GM10248 (cell line): ENCODE measurements at regions of chr15 and their contacts with region 1.

Region 1: GRCh38 chr15:40893733-40894688 is at the start of gene VPS18:
- DNase-seq: peak; percentile 96
- CTCF ChIP-seq: peak; percentile 95

Region 2: GRCh38 chr15:40593588-40594428 is 300.2 kb before region 1 on chr15 and contains the start of gene KNL1:
- CTCF ChIA-PET with region 1: interaction called, 10 read pairs
- POLR2A ChIA-PET with region 1: interaction called, 5 read pairs
- DNase-seq: peak; percentile 87
- CTCF ChIP-seq: no peak

Region 3: GRCh38 chr15:40722934-40723333 is 171.1 kb before region 1 on chr15:
- CTCF ChIA-PET with region 1: no interaction called
- POLR2A ChIA-PET with region 1: no interaction called
- DNase-seq: no peak
- CTCF ChIP-seq: no peak

Region 4: DNA sequence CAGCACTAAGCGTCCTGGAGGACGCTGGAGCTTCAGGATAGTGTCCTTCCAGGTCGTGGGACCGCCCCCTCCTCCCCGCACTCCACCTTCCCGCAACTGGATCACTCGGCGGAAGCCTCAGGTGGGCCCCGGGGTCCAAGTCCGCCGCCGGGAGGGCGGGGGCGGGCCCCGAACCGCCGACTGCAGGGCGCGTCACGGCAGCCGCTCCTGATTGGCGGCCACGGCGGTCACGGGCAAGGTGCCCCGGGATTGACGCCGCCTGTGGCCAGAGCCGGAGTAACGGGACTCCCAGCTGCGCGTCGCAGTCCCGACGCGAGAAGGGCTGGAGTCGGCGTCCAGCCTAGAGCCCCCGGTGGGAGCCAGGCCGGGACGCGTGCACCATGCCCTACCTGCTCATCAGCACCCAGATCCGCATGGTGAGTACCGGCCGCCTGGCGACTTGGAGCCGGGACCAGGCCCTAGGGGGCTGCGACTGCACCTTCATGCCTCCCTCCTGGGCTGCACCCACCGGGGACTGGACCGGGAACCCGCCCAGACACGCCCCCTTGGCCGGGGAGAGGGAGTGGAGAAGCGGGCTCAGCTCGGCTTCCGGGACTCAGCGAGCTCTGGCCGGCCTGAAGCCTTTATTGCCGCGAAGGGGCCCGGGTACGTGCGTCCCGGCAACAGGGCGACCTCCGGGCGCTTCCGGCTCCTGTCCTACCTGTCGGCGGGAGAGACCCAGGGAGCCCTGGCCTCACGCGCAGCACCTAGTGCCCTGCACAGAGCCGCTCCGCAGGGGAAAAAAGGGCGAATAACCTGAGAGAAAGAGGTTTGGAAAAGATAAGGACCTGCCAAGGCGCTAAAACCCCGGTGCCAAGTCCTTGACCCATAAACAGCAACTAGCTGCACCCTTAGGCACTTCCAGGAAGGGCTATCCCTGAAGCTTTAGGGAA is 129.9 kb before region 1 on chr15 and contains the start of gene GCHFR:
- CTCF ChIA-PET with region 1: interaction called, 13 read pairs
- POLR2A ChIA-PET with region 1: no interaction called
- DNase-seq: peak; percentile 89
- CTCF ChIP-seq: peak; percentile 37

Region 5: DNA sequence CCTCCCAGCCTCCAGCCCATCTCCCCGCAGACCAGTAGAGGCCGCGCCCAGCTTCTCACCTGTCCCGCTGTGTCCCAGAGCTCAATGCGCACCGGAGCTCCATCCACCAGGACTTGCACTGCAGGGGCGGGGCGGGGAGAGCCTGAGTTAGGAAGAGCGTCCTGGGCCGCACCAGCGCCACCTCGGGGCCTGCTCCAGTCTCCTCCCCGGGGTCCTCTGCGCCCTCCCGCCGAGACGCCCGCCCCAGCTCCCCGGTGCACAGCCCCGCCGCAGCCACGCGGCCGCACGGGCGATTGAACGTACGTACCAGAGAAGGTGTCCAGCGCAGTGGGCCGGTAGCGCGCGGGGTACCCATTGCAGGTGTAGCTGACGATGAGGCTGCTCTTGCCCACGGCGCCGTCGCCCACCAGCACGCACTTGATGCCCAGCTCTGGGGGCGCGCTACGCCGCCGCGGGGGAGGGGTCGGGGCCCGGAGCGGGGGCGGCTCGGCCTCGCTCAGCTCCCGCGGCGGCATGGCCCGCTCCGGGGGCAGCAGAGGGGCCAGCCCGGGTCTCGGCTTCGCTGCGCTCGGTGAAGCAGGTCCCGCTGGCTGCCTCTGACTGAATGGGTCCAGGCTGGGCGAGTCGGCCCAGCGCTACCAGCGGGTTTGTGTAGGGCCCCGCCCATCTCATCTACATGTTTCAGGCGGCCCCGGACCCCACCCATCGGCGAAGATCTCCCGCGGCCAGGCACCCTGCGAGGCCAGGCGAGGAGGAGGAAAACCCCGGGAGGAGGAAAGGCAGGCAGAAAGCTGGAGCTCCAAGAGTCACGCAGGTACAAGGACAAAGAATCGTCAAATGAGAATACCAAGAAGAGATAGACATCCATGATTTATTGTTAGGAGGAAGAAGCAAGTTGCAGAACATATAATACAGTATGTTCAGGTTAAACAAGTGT is 20.1 kb before region 1 on chr15 and contains the start of gene RHOV:
- CTCF ChIA-PET with region 1: interaction called, 294 read pairs
- POLR2A ChIA-PET with region 1: interaction called, 15 read pairs
- DNase-seq: peak; percentile 84
- CTCF ChIP-seq: peak; percentile 68

Region 6: GRCh38 chr15:40881351-40881750 is 12.7 kb before region 1 on chr15:
- CTCF ChIA-PET with region 1: interaction called, 294 read pairs
- POLR2A ChIA-PET with region 1: no interaction called
- DNase-seq: no peak
- CTCF ChIP-seq: no peak

Region 7: GRCh38 chr15:40906091-40906990 is 12.3 kb after region 1 on chr15:
- CTCF ChIA-PET with region 1: interaction called, 112 read pairs
- POLR2A ChIA-PET with region 1: no interaction called
- DNase-seq: peak; percentile 87
- CTCF ChIP-seq: peak; percentile 80

Region 8: DNA sequence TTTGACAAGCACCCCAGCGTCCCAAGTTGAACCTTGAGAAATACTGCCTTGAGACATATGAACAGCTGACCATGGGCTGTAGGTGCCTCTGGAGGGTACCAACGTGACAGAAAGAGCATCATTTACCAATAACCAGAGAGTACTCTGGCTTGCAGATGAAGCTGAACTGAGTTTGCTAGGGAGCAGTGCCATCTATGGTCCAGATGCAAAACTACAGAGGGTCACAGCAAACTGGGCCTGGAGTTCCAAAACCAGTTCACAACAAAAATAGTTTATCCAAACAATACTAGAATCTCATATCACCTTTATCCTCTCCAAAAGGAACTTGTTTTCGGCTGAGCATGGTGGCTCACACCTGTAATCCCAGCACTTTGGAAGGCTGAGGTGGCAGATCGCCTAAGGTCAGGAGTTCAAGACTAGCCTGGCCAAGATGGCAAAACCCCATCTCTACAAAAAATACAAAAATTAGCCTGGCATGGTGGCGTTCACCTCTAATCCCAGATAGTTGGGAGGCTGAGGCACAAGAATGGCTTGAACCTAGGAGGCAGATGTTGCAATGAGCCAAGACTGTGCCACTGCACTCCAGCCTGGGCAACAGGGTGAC is 128.6 kb after region 1 on chr15:
- CTCF ChIA-PET with region 1: interaction called, 17 read pairs
- POLR2A ChIA-PET with region 1: no interaction called
- DNase-seq: peak; percentile 37
- CTCF ChIP-seq: peak; percentile 65

Region 9: GRCh38 chr15:41079717-41080116 is 185.7 kb after region 1 on chr15:
- CTCF ChIA-PET with region 1: no interaction called
- POLR2A ChIA-PET with region 1: no interaction called
- DNase-seq: no peak
- CTCF ChIP-seq: no peak